OCI-LY7 (cell line): ENCODE measurements at regions of chr12 and their contacts with region 1.

Region 1: DNA sequence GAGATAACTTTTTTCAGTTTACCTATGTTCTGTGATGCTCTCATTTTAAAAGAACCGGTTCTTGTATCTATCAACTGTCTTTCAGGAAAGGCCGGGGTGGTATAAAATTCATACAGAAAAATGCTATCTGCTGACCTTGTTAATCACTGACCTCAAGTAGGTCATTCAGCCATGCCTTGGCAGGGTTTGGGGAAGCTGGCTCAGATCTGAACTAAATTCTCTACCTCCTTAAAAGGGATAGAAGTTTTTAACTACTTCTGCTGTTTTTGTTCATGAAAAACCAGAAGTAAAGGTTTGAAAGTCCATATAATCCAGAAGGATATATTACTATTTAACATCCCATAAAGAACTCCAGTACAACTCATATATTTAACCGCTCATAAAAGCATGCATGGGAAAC is 10.1 kb downstream of the MYRFL start:
- DNase-seq: no peak
- H3K4me3 ChIP-seq: no peak overlapping the region
- H3K27ac ChIP-seq: no peak overlapping the region
- H3K4me1 ChIP-seq: no peaks in the 10 kb centered on the region
- CTCF ChIP-seq: no peak

Region 2: DNA sequence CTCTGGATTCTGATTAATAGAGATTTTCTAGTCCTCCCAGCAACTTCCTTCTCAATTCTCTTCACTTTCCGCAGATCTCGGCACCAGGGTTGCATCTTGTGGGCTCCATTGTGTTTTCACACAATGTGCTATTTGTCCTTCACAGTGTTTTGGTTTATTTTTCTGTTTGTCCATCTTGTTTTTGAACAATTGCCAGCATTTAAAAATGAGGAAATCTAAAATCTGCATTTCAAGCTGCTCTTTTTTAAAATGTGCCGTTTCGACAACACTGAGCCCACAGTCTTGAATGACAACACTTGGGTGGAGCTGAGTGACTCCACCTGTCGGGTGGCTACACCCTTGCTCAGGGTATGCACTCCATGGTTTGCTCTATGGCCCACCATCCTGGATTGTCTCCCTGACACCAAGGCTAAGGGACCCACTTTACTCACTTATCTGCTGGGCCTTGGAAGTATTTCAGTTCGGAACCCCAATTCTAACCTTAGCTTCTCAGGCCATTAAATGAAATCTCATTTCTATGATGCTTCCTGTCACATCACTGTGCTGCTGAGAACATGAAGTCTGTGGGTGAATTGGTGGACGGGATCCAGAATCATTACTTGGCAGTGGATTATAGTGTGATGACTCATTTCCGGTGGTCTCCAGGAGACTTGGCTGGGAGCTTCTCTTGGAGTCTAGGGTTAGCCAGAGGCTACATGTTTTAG is 13.5 kb before region 1 on chr12:
- CTCF ChIA-PET with region 1: no interaction called
- POLR2A ChIA-PET with region 1: no interaction called
- intact Hi-C with region 1: loop called (anchors 1 kb)
- DNase-seq: no peak
- H3K4me3 ChIP-seq: no peak overlapping the region
- H3K27ac ChIP-seq: no peak overlapping the region
- H3K4me1 ChIP-seq: no peaks in the 10 kb centered on the region
- CTCF ChIP-seq: no peak

Region 3: DNA sequence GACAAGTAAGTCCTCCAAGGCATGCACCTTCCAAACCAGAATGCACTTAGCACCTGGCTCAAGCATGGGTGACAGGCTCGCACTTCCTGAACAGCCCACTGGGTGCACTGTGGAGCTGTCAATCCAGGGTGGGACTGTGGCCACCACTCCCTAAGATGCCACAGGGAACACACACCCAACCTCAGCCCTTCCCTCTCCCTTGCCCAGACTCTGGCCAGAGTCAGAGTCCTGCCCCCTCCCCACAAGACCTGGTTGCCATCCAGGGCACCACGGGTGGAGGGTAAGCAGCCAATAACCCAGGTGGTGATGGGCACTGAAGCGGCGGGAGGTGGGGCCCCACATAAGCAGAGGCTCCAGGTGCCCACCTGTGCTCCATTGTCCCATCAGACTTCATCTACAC is 150.6 kb after region 1 on chr12:
- CTCF ChIA-PET with region 1: no interaction called
- POLR2A ChIA-PET with region 1: no interaction called
- intact Hi-C with region 1: no loop called
- DNase-seq: peak; percentile 42
- H3K4me3 ChIP-seq: no peak overlapping the region
- H3K27ac ChIP-seq: no peak overlapping the region
- H3K4me1 ChIP-seq: no peaks in the 10 kb centered on the region
- CTCF ChIP-seq: peak; percentile 70

Region 4: DNA sequence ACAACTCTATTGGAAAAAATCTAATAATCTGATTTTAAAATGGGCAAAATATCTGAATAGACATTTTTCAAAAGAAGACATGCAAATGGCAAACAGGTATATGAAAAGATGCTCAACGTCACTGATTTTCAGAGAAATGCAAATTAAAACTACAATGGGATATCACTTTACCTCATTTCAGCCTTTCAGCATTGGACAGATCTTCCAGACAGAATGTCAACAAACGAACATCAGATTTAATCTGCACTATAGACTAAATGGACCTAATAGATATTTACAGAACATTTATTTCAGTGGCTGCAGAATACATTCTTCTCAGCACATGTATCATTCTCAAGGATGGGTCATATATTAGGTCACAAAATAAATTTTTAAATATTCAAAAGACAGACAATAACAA is 187.8 kb after region 1 on chr12:
- CTCF ChIA-PET with region 1: no interaction called
- POLR2A ChIA-PET with region 1: no interaction called
- intact Hi-C with region 1: no loop called
- DNase-seq: no peak
- H3K4me3 ChIP-seq: no peak overlapping the region
- H3K27ac ChIP-seq: no peak overlapping the region
- H3K4me1 ChIP-seq: no peaks in the 10 kb centered on the region
- CTCF ChIP-seq: no peak